ENCODE measurements at regions of chr2 and their contacts with region 1.

Region 1: DNA sequence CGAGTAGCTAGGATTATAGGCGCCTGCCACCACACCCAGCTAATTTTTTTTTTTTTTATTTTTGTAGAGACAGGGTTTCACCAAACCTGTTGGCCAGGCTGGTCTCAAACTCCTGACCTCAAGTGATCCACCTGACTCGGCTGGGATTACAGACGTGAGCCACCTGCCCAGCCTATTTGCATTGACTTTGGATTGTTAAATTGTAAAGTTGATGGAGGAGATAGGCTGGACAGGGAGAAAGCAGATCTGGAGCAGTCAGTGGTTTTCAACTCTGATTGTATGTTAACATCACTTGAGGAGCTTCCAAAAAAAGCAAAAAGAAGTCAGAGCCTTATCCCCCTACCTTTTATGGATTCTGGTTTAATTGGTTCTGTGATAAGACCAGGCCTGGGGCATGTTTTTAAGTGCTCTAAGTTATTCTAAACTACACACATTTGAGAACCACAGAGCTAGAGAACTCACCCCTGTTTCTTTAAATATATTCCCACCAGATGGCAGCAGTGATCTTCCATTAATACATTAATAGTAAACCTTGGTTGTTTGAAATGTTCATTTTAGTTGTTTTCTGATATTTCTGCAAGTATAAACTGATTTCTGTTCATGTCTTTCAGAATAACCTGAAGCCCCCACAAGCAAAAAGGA is 7.5 kb downstream of the C2orf49 start:
- DNase-seq: no peak
- ATAC-seq: peak; percentile 8 to 53 (median 27)
- H3K4me3 ChIP-seq: no peak overlapping the region
- H3K27ac ChIP-seq: no peak overlapping the region
- H3K4me1 ChIP-seq: peaks cover 0 to 3% (median 0%) of the 10 kb centered on the region in 12 donors
- H3K27me3 ChIP-seq: no peaks in the 10 kb centered on the region
- CTCF ChIP-seq: peak; percentile 9 to 61 (median 36)
- POLR2A ChIP-seq: no peak

Region 2: DNA sequence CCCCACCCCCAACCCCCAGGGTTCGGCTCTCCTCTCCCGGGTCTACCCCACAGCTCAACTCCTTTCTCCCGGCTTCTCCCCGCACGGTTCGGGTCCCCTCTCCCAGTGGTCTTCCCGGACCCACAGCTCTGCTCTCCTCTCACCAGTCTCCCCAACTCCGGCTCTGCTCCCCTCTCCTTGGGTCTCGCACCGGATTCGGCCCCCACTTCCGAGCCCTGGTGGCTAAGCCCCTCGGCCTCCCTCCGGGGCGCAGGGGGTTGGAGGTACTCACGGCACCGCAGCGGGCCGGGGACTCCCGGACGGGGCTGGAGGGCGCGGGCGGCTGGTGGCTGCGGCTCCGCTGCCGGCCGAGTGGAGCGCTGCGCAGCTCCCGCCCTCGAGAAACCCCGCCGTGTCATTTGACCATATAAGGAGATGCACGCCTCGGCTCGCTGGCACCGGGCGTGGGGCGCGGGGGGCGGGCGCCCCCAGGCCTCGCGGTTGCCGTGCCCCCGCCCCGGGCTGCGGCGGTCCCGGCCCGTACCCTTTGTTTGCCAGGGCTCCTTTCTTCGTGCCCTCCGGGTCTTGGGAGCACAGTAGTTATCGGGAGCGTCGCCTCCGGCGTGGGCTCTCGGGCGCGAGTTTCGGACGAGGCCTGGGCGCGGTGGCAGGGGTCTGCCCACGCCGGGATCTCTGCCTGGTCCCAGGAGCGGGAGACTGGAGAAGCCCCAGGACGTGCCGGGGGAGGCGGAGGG is 54.0 kb after region 1 on chr2 and contains the start of gene FHL2:
- intact Hi-C with region 1: no loop called
- DNase-seq: peak; percentile 70 to 87 (median 74)
- ATAC-seq: peak; percentile 21 to 64 (median 50)
- H3K4me3 ChIP-seq: peak within 1 kb of the TSS; percentile 19 to 80 (median 70)
- H3K27ac ChIP-seq: peak within 1 kb of the TSS; percentile 70 to 96 (median 91)
- H3K4me1 ChIP-seq: peaks cover 0 to 81% (median 20%) of the 10 kb centered on the region in 12 donors
- H3K27me3 ChIP-seq: peaks cover 0 to 22% (median 0%) of the 10 kb centered on the region in 9 donors
- CTCF ChIP-seq: peak in 10 of 12 donors; percentile 9 to 69 (median 44)
- POLR2A ChIP-seq: peak in 1 of 2 donors; percentile 62
- total RNA-seq, gene FHL2: 649 to 4,692 (median 1,370) TPM

Region 3: GRCh38 chr2:105521205-105521604 is 176.4 kb after region 1 on chr2:
- intact Hi-C with region 1: loop called in 4 of 10 experiments (anchors 2 to 5 kb)
- DNase-seq: no peak
- ATAC-seq: no peak
- H3K4me3 ChIP-seq: no peak overlapping the region
- H3K27ac ChIP-seq: peak overlapping the region in 6 of 12 donors; percentile 28 to 89 (median 42)
- H3K4me1 ChIP-seq: peaks cover 0 to 39% (median 19%) of the 10 kb centered on the region in 12 donors
- H3K27me3 ChIP-seq: no peaks in the 10 kb centered on the region
- CTCF ChIP-seq: peak; percentile 44 to 74 (median 64)
- POLR2A ChIP-seq: no peak

Region 4: GRCh38 chr2:105545730-105546627 is 201.2 kb after region 1 on chr2:
- intact Hi-C with region 1: loop called in 1 of 10 experiments (anchors 5 kb)
- DNase-seq: peak; percentile 60 to 74 (median 69)
- ATAC-seq: peak in 3 of 4 donors; percentile 62 to 77 (median 65)
- H3K4me3 ChIP-seq: no peak overlapping the region
- H3K27ac ChIP-seq: no peak overlapping the region
- H3K4me1 ChIP-seq: peaks cover 0 to 15% (median 1%) of the 10 kb centered on the region in 12 donors
- H3K27me3 ChIP-seq: peaks cover 0 to 3% (median 0%) of the 10 kb centered on the region in 9 donors
- CTCF ChIP-seq: peak; percentile 71 to 90 (median 81)
- POLR2A ChIP-seq: no peak

Region 5: GRCh38 chr2:106098081-106098480 is 753.3 kb after region 1 on chr2:
- intact Hi-C with region 1: loop called in 1 of 10 experiments (anchors 10 kb)
- DNase-seq: no peak
- ATAC-seq: peak in 2 of 4 donors; percentile 20 to 37
- H3K4me3 ChIP-seq: no peak overlapping the region
- H3K27ac ChIP-seq: no peak overlapping the region
- H3K4me1 ChIP-seq: peaks cover 0 to 11% (median 0%) of the 10 kb centered on the region in 12 donors
- H3K27me3 ChIP-seq: no peaks in the 10 kb centered on the region
- CTCF ChIP-seq: peak in 9 of 12 donors; percentile 5 to 52 (median 34)
- POLR2A ChIP-seq: no peak

Measured in heart left ventricle (tissue), 16 donors.